Heart right ventricle (tissue), 16 donors: ENCODE measurements at regions of chr5 and their contacts with region 1.

Region 1: DNA sequence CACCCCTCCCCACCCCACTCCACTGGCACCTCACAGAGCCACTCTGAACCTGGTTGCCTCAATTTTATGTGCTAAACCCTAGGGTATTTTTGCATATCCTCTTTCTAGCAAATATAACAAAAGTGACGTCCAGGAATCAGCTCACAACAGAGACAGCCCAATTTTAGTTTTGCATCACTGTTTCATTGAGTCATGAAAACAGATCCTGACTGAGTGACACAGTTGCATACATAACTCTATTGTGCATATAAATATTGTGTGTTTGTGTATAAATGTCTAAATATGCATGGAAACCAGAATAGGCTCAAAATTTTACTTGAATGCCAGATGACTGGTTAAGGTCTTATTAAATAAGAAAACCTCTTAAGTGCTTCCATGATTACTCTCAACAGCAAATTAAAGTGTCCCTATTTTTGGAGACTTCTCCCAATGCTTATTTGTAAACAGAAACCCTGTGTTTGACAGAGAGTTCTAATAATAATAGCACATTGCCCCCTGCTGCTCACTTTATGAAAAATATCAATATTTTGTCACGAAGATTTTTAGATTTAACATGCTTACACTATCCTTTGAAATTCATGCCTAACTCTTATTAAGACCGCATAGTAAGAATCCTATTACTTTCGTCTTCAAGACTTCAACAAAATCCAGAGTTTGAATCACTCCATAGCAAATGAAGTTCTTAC is 75.5 kb upstream of the PRRC1 start:
- DNase-seq: no peak
- ATAC-seq: no peak
- H3K4me3 ChIP-seq: no peak overlapping the region
- H3K27ac ChIP-seq: no peak overlapping the region
- H3K4me1 ChIP-seq: no peaks in the 10 kb centered on the region
- H3K27me3 ChIP-seq: peaks cover 0 to 11% (median 0%) of the 10 kb centered on the region in 7 donors
- CTCF ChIP-seq: peak in 5 of 9 donors; percentile 20 to 42 (median 28)

Region 2: DNA sequence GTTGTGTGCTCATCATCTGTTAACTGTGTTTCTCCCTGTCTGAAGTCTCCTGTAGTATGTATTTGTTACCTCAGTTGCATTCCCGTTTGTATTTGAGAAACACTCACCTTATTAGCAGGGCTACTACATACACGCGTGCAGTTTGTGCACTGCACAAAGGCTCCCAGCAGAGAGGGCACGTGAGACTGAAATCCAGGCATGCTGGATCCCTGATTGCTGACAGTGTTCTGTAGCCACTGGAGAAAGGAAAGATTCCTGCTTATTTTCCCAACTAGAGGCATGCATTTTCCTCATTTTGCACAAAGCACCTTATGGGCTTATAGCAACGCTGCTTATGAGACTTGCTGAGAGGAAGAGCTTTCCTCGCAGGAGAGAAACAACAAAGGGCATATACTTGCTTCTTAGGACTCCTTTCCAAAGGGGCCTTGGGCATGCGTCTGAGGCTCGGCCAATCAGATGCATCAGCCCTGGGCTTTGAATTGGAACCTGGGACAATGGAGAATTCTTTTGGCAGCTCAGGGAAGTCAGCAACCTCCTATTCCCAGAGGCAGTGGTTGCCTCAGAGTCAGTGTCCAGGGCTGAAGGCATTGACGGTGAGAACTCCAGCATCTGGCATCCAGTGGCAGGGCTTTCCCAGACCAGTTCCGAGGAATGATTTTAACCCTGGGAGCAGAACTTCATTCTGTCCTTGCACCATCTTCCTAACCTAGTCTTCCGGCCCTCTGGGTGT is 161.3 kb before region 1 on chr5:
- intact Hi-C with region 1: loop called in 1 of 10 experiments (anchors 10 kb)
- DNase-seq: no peak
- ATAC-seq: no peak
- H3K4me3 ChIP-seq: no peak overlapping the region
- H3K27ac ChIP-seq: no peak overlapping the region
- H3K4me1 ChIP-seq: no peaks in the 10 kb centered on the region
- H3K27me3 ChIP-seq: peaks cover 0 to 42% (median 12%) of the 10 kb centered on the region in 7 donors
- CTCF ChIP-seq: no peak